ENCODE measurements at regions of chr14 and their contacts with region 1.

Region 1: DNA sequence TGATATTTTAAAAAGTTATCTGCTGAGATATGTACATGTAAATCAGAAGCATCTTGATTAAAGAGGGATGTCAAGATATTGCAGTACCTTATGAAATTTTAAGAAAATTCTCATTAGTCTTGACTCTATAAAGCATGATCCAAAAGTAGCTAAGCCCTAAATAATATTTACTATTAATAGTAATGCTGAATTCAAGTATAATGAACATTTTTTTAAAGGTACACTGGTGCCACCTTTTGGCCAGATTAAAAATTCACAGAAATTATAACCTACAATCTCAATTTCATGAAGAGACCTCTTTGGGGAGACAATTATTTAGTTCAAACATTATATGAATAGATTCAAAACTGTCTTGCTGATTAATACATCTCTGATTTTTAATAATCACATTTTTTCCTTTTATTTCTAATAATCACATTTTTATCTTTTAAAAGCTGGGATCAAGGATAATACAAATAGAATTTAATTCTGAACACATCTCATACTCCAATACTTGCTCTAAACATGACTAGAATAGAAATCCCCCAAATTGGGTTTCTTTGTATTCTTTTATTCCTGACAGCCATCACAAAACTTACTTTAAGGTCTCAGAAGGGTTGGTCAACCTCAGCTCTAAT is 13.4 kb downstream of the AKAP5 start:
- DNase-seq: no peak
- ATAC-seq: no peak
- H3K4me3 Mint-ChIP-seq: no peak overlapping the region
- H3K27ac Mint-ChIP-seq: no peak overlapping the region
- H3K4me1 Mint-ChIP-seq: no peaks in the 10 kb centered on the region
- H3K27me3 Mint-ChIP-seq: no peaks in the 10 kb centered on the region

Region 2: GRCh38 chr14:64345513-64345912 is 133.2 kb before region 1 on chr14:
- CTCF ChIA-PET with region 1: interaction called, 48 read pairs
- POLR2A ChIA-PET with region 1: no interaction called
- DNase-seq: no peak
- ATAC-seq: no peak
- H3K4me3 Mint-ChIP-seq: no peak overlapping the region
- H3K27ac Mint-ChIP-seq: no peak overlapping the region
- H3K4me1 Mint-ChIP-seq: peaks cover 7% of the 10 kb centered on the region
- H3K27me3 Mint-ChIP-seq: no peaks in the 10 kb centered on the region

Region 3: DNA sequence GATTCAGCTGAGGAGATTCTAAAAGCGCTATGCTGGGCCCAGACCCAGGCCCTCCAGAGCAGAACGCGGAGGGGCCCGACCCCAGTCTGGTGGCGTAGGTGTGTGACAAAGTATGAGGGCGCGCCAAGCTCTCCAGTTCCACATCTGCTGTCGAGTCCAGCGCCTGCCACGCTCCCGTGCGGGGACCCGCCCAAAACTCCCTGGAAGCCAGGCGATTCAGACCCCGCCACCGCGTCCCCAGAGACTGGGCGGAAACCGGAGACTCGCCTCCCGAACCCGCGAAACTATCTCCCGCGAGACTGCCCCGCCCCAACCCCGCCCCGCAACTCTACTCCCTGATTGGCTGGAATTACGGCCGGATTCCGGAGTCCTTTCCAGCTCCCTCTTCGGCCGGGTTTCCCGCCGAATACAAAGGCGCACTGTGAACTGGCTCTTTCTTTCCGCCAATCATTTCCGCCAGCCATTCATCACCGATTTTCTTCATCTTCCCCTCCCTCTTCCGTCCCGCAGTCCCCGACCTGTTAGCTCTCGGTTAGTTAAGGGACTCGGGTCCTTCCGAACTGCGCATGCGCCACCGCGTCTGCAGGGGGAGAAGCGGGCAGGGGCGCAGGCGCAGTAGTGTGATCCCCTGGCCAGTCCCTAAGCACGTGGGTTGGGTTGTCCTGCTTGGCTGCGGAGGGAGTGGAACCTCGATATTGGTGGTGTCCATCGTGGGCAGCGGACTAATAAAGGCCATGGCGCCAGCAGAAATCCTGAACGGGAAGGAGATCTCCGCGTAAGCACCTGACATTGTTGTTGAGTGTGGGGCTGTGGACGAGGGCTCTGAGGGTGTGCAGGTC is 90.8 kb before region 1 on chr14 and contains the start of gene MTHFD1:
- CTCF ChIA-PET with region 1: interaction called, 11 read pairs
- POLR2A ChIA-PET with region 1: interaction called, 3 read pairs
- DNase-seq: peak; percentile 99
- ATAC-seq: peak; percentile 92
- H3K4me3 Mint-ChIP-seq: peak within 1 kb of the TSS; percentile 99
- H3K27ac Mint-ChIP-seq: peak within 1 kb of the TSS; percentile 94
- H3K4me1 Mint-ChIP-seq: peaks cover 45% of the 10 kb centered on the region
- H3K27me3 Mint-ChIP-seq: no peaks in the 10 kb centered on the region
- total RNA-seq, gene MTHFD1: 231 to 238 TPM

Region 4: DNA sequence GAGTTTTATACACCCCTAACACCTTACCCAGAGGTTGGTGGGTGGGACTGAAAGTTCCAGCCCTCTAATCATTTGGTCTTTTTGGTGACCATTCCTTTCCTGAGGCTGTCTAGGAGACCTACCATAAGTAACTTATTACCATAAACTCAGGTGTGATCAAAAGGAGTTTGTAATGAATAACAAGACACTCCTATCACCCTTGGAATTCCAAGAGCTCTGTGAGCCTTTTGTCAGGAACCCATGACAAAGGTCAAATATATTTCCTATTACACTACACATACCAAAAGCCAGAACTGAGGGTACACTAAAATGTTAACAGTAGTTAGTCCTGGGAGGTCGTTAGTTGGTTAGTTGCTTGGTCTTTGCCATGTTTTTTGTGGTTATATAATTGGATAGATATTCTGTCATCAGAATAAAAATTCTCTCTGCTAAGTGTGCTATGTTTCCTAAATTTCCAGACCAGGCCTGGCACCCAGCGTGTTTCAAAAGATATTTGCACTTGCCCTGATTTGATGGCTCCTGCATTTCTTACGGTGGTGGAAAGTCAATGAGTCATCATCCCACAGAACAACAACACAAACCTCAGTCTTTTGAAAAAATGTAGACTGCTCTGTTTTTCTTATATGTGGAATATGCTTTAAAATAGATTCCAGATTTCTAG is 40.4 kb before region 1 on chr14:
- CTCF ChIA-PET with region 1: interaction called, 17 read pairs
- POLR2A ChIA-PET with region 1: no interaction called
- DNase-seq: no peak
- ATAC-seq: peak; percentile 51
- H3K4me3 Mint-ChIP-seq: no peak overlapping the region
- H3K27ac Mint-ChIP-seq: peak overlapping the region; percentile 9
- H3K4me1 Mint-ChIP-seq: peaks cover 16% of the 10 kb centered on the region
- H3K27me3 Mint-ChIP-seq: no peaks in the 10 kb centered on the region

Region 5: GRCh38 chr14:64444984-64445845 is 33.5 kb before region 1 on chr14:
- CTCF ChIA-PET with region 1: interaction called, 13 read pairs
- POLR2A ChIA-PET with region 1: interaction called, 3 read pairs
- DNase-seq: peak; percentile 63
- ATAC-seq: peak; percentile 75
- H3K4me3 Mint-ChIP-seq: no peak overlapping the region
- H3K27ac Mint-ChIP-seq: peak overlapping the region; percentile 91
- H3K4me1 Mint-ChIP-seq: peaks cover 54% of the 10 kb centered on the region
- H3K27me3 Mint-ChIP-seq: no peaks in the 10 kb centered on the region

Region 6: GRCh38 chr14:64465191-64465822 is 13.4 kb before region 1 on chr14 and contains the start of gene AKAP5:
- CTCF ChIA-PET with region 1: interaction called, 12 read pairs
- POLR2A ChIA-PET with region 1: no interaction called
- DNase-seq: peak; percentile 71
- ATAC-seq: peak; percentile 92
- H3K4me3 Mint-ChIP-seq: peak within 1 kb of the TSS; percentile 80
- H3K27ac Mint-ChIP-seq: peak within 1 kb of the TSS; percentile 71
- H3K4me1 Mint-ChIP-seq: peaks cover 40% of the 10 kb centered on the region
- H3K27me3 Mint-ChIP-seq: peaks cover 4% of the 10 kb centered on the region
- total RNA-seq, gene AKAP5: 1.9 to 2.1 TPM

Region 7: DNA sequence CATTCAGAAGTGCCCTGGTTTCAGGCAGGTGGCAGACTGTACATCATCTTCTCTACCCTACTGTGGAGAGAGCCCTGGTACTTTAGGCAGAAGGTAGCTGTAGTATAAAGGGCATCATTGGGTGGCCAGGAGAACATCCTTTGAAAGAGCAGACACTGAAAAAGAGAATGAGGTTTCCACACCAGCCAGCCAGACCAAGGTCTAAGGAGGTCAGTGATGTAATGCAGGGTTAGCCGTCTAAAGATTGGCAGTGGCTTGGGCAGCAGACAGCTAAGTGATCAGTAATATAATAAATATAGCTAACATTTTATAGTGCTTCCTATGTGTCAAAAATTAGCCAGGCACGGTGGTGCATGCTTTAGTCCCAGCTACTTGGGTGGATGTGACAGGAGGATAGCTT is 12.9 kb after region 1 on chr14:
- CTCF ChIA-PET with region 1: interaction called, 18 read pairs
- POLR2A ChIA-PET with region 1: interaction called, 3 read pairs
- DNase-seq: no peak
- ATAC-seq: no peak
- H3K4me3 Mint-ChIP-seq: no peak overlapping the region
- H3K27ac Mint-ChIP-seq: peak overlapping the region; percentile 16
- H3K4me1 Mint-ChIP-seq: peaks cover 31% of the 10 kb centered on the region
- H3K27me3 Mint-ChIP-seq: no peaks in the 10 kb centered on the region